Activated B cell treated with CpG ODN at 0.5 μM for 24 hours (primary cell): ENCODE measurements at regions of chr4 and their contacts with region 1.

Region 1: GRCh38 chr4:40309250-40309774 is 25.8 kb upstream of the CHRNA9 start:
- DNase-seq: peak; percentile 78
- ATAC-seq: peak; percentile 20
- H3K4me3 Mint-ChIP-seq: peak overlapping the region; percentile 60
- H3K27ac Mint-ChIP-seq: peak overlapping the region; percentile 92
- H3K4me1 Mint-ChIP-seq: peaks cover 74% of the 10 kb centered on the region
- H3K27me3 Mint-ChIP-seq: no peaks in the 10 kb centered on the region
- CTCF ChIP-seq: no peak

Region 2: DNA sequence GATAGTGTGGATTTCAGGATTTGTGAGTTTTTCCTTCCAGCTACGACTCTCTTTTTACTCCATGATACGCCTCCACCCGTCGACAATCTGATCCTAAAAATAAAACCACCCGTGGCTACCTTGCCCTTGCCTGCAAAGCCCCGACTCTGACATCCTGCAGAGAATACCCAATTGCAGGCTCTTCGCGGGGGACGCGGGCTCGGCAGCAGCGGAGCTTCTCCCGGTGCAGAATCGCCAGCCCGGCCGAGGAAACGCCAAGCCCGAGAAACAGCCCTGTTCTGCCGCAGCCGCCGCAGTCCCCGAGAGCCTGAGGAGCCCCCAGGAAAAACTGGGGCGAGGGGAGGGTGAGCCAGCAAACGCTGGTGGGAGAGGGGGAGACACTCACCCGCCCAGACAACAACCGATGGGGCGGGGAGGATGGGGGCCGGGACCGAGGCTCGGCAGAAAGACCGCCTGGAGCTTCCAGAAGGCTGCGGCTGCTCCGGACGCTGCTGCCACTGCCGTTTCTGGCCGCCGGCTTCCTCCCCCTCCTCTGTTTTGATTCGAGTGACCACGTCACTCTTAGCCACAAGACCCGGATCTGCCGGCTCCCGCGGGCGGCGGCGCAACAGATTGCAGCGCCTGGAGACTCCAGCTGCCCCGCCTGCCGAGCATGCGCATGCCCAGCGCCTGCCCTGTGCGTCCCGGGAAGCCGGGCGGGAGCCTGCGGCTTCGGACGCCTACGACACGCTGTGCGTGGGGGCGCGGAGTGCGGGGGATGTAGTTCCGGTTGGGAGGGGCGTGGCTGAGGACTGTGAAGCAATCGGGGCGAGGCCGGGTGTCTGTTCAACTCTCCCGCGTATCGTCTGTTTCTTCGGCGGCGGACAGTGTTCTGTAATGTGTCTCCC is 670.7 kb before region 1 on chr4 and contains the start of gene SMIM14:
- CTCF ChIA-PET with region 1: no interaction called
- POLR2A ChIA-PET with region 1: no interaction called
- intact Hi-C with region 1: loop called (anchors 10 kb)
- DNase-seq: peak; percentile 92
- ATAC-seq: peak; percentile 82
- H3K4me3 Mint-ChIP-seq: peak within 1 kb of the TSS; percentile 96
- H3K27ac Mint-ChIP-seq: peak within 1 kb of the TSS; percentile 97
- H3K4me1 Mint-ChIP-seq: peaks cover 58% of the 10 kb centered on the region
- H3K27me3 Mint-ChIP-seq: no peaks in the 10 kb centered on the region
- CTCF ChIP-seq: no peak
- total RNA-seq, gene SMIM14: 83.1 and 86.5 TPM in 2 replicates

Region 3: DNA sequence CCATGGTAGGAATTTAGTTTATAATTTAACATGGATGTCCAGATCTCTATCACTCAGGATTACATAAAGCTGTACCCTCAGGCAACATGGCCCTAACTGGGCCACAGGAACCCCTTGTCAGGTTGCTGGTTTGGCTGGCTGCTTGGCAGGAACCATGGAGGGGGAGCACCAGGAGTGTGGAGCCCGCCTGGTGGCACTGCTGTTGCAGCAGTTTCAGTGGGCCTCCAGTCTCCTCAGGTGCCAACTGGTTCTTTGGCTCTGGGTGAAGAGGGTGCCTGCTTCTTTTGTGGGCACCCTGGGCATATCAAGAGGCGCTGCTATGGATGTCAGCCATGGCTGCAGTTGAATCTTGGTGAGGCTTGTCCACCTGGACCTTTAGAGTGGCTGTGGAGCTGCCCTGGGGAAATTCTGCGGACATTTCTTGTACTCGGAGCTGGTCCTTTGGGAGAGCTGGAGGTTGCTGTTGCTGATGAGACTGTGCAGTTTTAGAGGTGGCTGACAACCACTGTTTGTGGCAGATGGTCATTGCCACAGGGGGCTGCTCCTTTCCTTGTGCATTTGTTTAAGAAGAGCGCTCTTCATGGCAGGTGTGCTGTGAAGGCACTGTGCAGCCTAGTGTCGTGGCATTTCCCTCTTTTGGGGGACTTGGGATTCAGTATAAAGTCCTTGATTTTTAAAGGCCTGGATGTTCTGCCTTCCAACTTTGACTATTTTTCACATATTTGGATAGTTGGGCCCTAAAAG is 660.3 kb before region 1 on chr4:
- CTCF ChIA-PET with region 1: no interaction called
- POLR2A ChIA-PET with region 1: no interaction called
- intact Hi-C with region 1: no loop called
- DNase-seq: no peak
- ATAC-seq: no peak
- H3K4me3 Mint-ChIP-seq: no peak overlapping the region
- H3K27ac Mint-ChIP-seq: no peak overlapping the region
- H3K4me1 Mint-ChIP-seq: peaks cover 21% of the 10 kb centered on the region
- H3K27me3 Mint-ChIP-seq: no peaks in the 10 kb centered on the region
- CTCF ChIP-seq: no peak

Region 4: GRCh38 chr4:40149960-40150385 is 159.3 kb before region 1 on chr4:
- CTCF ChIA-PET with region 1: interaction called, 69 read pairs
- POLR2A ChIA-PET with region 1: interaction called, 9 read pairs
- intact Hi-C with region 1: loop called (anchors 1 kb)
- DNase-seq: no peak
- ATAC-seq: peak; percentile 97
- H3K4me3 Mint-ChIP-seq: no peak overlapping the region
- H3K27ac Mint-ChIP-seq: peak overlapping the region; percentile 59
- H3K4me1 Mint-ChIP-seq: peaks cover 38% of the 10 kb centered on the region
- H3K27me3 Mint-ChIP-seq: no peaks in the 10 kb centered on the region
- CTCF ChIP-seq: peak; percentile 57

Region 5: GRCh38 chr4:40199999-40200874 is 109.1 kb before region 1 on chr4:
- CTCF ChIA-PET with region 1: interaction called, 25 read pairs
- POLR2A ChIA-PET with region 1: interaction called, 187 read pairs
- intact Hi-C with region 1: loop called (anchors 1 kb)
- DNase-seq: no peak
- ATAC-seq: peak; percentile 20
- H3K4me3 Mint-ChIP-seq: peak overlapping the region; percentile 97
- H3K27ac Mint-ChIP-seq: peak overlapping the region; percentile 95
- H3K4me1 Mint-ChIP-seq: peaks cover 67% of the 10 kb centered on the region
- H3K27me3 Mint-ChIP-seq: no peaks in the 10 kb centered on the region
- CTCF ChIP-seq: no peak

Region 6: DNA sequence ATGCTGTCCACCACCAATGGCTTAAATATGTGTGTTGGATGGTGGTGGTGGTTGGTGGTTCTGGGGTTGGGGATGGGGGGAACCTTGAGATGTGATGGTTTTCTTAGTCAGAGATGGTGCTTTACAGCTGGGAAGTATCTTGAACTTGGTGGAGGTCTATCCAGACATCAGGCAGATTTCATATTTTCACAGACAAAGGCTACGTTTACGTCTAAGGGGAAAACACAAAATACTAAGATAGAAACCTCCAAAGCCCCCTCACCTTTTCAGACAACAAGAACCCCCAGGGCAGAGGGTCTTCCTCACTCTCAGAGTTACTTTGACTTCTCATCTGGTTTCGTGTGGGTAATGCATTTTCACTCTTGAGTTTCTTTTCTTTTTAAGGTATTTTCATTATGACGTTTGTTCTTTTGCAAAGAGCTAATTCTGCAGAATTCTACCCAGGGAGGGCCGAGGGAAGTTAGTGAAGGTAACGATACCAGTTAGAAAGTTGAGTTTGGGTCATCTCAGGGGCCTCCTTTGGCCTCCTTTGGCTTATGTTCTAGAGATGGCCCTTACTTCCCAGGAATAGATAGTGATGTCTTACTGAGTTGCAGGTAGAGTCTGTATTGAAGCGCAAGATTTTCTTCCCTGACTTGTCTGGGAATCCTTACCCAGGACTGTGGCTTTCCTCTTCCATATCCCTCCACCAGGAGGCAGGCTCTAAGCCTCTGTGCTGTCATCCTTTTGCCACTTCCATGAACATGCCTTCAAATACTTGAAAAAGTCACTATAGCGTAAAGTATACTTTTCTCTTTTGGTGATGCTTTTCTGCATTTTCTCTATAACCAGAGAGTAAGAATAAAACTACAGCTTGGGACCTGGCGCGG is 80.6 kb before region 1 on chr4:
- CTCF ChIA-PET with region 1: interaction called, 24 read pairs
- POLR2A ChIA-PET with region 1: interaction called, 15 read pairs
- intact Hi-C with region 1: loop called (anchors 1 kb)
- DNase-seq: no peak
- ATAC-seq: peak; percentile 9
- H3K4me3 Mint-ChIP-seq: peak overlapping the region; percentile 25
- H3K27ac Mint-ChIP-seq: peak overlapping the region; percentile 78
- H3K4me1 Mint-ChIP-seq: peaks cover 91% of the 10 kb centered on the region
- H3K27me3 Mint-ChIP-seq: no peaks in the 10 kb centered on the region
- CTCF ChIP-seq: no peak

Region 7: GRCh38 chr4:40289366-40290188 is 19.7 kb before region 1 on chr4:
- CTCF ChIA-PET with region 1: interaction called, 5 read pairs
- POLR2A ChIA-PET with region 1: interaction called, 10 read pairs
- intact Hi-C with region 1: loop called (anchors 1 kb)
- DNase-seq: no peak
- ATAC-seq: peak; percentile 70
- H3K4me3 Mint-ChIP-seq: peak overlapping the region; percentile 33
- H3K27ac Mint-ChIP-seq: peak overlapping the region; percentile 85
- H3K4me1 Mint-ChIP-seq: peaks cover 77% of the 10 kb centered on the region
- H3K27me3 Mint-ChIP-seq: no peaks in the 10 kb centered on the region
- CTCF ChIP-seq: no peak